Colonic mucosa (tissue), 4 donors: ENCODE measurements at regions of chr14 and their contacts with region 1.

Region 1: GRCh38 chr14:94036313-94037050 is 10.3 kb downstream of the OTUB2 start:
- DNase-seq: peak; percentile 81
- H3K4me3 ChIP-seq: no peak overlapping the region
- H3K27ac ChIP-seq: no peak overlapping the region
- H3K4me1 ChIP-seq: no peaks in the 10 kb centered on the region
- H3K27me3 ChIP-seq: no peaks in the 10 kb centered on the region
- CTCF ChIP-seq: peak; percentile 79

Region 2: DNA sequence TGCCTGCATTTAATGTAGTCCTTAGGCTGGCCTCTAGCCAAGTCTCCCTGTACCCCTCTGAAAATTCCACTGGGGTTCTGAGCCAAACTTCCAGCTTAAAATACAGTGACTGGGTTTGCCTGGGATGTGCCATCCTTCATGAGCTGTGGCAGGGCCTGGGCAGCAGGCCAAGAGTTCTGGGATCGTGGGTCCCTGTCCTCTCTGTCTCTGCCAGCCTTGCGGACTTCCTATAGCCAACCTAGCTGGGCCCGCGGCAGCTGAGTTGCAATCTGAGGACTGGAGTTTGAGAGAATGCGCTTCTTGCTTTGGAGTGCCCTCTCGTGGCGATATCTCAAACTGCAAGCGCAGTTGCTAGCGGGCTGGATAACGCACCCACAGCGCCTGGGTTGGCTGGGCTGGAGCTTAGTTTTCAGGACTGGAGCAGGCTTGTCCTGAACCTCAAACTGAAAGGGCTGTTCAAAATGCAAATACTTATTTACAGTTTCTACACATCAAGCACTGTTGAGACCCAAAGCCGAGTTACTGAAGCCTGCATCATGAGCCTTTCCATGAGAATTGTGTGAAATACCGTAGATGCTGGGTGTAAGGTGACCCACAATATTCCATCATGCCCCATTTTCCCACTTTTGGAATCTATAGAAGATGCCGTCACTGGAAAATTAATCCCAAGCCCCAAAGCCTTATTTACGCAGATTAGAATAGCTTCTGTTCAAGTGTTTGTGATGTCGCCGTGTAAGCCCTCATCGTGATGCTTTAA is 100.3 kb after region 1 on chr14:
- intact Hi-C with region 1: loop called (anchors 2 kb)
- DNase-seq: peak; percentile 90
- H3K4me3 ChIP-seq: no peak overlapping the region
- H3K27ac ChIP-seq: no peak overlapping the region
- H3K4me1 ChIP-seq: no peaks in the 10 kb centered on the region
- H3K27me3 ChIP-seq: no peaks in the 10 kb centered on the region
- CTCF ChIP-seq: peak; percentile 98

Region 3: DNA sequence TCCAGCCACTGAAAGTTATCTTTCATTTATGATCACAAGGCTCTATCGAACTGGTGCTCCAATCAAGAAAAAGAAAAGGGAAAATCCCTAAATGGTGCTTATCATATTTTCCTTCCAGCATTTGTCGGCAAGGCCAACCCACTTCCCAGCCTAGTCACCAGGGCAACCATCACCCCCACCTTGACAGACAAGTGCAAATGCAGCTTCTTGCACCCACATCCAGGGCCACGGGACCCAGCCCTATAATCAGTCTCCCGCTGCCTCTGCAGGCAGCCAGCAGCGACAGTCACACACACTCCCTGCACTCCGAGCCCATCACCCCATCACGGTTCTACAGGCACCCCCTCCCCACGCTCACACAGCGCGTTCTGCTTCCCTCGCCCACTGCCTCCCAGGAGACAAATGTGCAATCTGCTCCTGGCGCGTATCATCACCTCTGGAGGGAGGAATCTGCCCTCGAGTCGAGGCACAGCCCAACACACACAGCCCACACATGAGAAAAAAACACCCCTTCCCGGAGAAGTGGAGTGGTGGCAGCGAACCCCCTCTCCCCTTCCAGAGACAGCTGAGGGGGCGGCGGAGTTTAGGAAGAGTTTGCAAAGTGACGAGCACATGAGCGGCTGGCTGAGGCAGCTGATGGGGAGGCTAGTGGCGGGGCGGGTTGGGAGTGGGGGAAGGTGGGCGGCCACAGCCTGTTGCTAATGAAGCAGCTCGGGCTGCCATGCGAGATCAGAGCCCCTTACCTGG is 128.4 kb after region 1 on chr14:
- intact Hi-C with region 1: no loop called
- DNase-seq: no peak
- H3K4me3 ChIP-seq: no peak overlapping the region
- H3K27ac ChIP-seq: no peak overlapping the region
- H3K4me1 ChIP-seq: no peaks in the 10 kb centered on the region
- H3K27me3 ChIP-seq: no peaks in the 10 kb centered on the region
- CTCF ChIP-seq: no peak